Ovary (tissue), 10 donors: ENCODE measurements at regions of chr1 and their contacts with region 1.

Region 1: GRCh38 chr1:243850452-243851256 is 611 bp upstream of the AKT3 start:
- DNase-seq: peak; percentile 87 to 92 (median 90)
- H3K4me3 ChIP-seq: peak overlapping the region; percentile 62
- H3K27ac ChIP-seq: peak overlapping the region; percentile 94 to 100
- H3K4me1 ChIP-seq: no peaks in the 10 kb centered on the region
- H3K27me3 ChIP-seq: no peaks in the 10 kb centered on the region
- CTCF ChIP-seq: no peak
- EP300 ChIP-seq: no peak
- POLR2A ChIP-seq: peak; percentile 28

Region 2: GRCh38 chr1:243917177-243917862 is 66.7 kb after region 1 on chr1:
- intact Hi-C with region 1: loop called in 1 of 4 experiments (anchors 10 kb)
- DNase-seq: peak; percentile 31 to 66 (median 60)
- H3K4me3 ChIP-seq: peak overlapping the region; percentile 49
- H3K27ac ChIP-seq: peak overlapping the region in 1 of 2 donors; percentile 40
- H3K4me1 ChIP-seq: peaks cover 2% of the 10 kb centered on the region
- H3K27me3 ChIP-seq: no peaks in the 10 kb centered on the region
- CTCF ChIP-seq: no peak
- EP300 ChIP-seq: no peak
- POLR2A ChIP-seq: no peak

Region 3: GRCh38 chr1:244047621-244048471 is 197.2 kb after region 1 on chr1:
- intact Hi-C with region 1: loop called in 2 of 4 experiments (anchors 5 kb)
- DNase-seq: peak; percentile 98 to 99 (median 99)
- H3K4me3 ChIP-seq: peak overlapping the region; percentile 94
- H3K27ac ChIP-seq: peak overlapping the region; percentile 91 to 92
- H3K4me1 ChIP-seq: no peaks in the 10 kb centered on the region
- H3K27me3 ChIP-seq: no peaks in the 10 kb centered on the region
- CTCF ChIP-seq: peak in 2 of 3 donors; percentile 11 to 20
- EP300 ChIP-seq: no peak
- POLR2A ChIP-seq: peak; percentile 95

Region 4: DNA sequence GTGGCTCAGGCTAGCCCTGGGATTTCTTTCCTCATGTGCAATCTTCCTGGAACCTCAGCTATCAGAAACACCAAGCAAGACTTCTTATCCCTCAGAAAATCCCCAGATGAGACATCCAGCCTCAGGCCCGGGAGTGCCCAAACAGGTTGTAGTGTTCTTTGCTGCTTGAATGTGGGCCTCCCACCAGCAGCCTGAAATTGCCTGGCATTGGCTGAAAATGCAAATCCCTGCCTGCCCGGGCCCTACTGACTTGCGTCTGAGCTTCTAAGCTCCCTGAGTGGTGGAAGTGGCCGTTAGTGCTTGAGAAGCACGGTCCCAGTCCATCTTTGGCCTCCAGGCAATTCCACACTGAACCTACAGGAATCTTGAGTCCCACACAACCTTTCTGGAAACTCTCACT is 347.3 kb after region 1 on chr1:
- intact Hi-C with region 1: no loop called
- DNase-seq: no peak
- H3K4me3 ChIP-seq: no peak overlapping the region
- H3K27ac ChIP-seq: no peak overlapping the region
- H3K4me1 ChIP-seq: no peaks in the 10 kb centered on the region
- H3K27me3 ChIP-seq: no peaks in the 10 kb centered on the region
- CTCF ChIP-seq: no peak
- EP300 ChIP-seq: no peak
- POLR2A ChIP-seq: no peak